GM10248 (cell line): ENCODE measurements at regions of chr10 and their contacts with region 1.

Region 1: DNA sequence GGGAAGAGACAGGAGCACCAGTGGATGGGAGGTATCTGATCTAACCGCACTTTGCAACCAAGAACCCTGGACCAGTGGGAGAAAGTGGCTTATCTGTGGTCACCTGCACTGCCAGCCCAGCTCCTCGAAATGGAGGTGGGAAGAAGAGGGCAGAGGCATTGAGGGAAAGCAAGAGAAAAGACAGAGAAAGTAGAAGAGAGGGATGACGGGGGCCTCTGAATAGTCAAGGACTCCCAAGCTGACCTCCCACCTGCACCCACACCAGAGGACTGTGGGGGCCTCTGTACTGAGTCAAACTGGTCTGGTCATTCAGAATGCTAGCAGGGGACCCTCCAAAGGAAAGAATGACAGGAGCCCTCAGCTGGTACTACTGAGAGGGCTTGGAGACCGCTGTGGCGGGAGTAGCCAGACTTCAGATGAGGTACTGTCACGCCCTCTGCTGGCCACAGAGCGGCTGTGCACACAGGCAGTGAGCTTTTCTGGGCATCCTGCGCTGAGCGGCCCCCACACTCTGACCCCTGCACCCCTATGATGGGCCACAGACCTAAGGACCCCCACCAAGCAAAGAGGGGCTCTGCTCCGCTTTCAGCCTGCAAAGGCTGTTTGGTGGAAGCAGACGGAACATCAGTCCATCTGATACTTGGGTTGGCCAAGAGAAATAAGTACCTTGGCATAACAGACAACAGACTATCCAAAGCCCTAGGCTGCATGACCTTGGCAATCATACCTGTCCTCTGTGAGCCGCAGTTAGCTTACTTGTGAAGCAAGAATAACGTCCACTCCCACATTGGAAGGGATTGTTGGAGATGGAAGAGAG is 112.9 kb downstream of the COL13A1 start:
- DNase-seq: peak; percentile 79
- CTCF ChIP-seq: peak; percentile 94

Region 2: GRCh38 chr10:69403519-69403918 is 511.1 kb before region 1 on chr10:
- CTCF ChIA-PET with region 1: no interaction called
- POLR2A ChIA-PET with region 1: no interaction called
- DNase-seq: no peak
- CTCF ChIP-seq: no peak

Region 3: GRCh38 chr10:69644658-69645295 is 269.8 kb before region 1 on chr10:
- CTCF ChIA-PET with region 1: interaction called, 21 read pairs
- POLR2A ChIA-PET with region 1: no interaction called
- DNase-seq: peak; percentile 78
- CTCF ChIP-seq: peak; percentile 64

Region 4: DNA sequence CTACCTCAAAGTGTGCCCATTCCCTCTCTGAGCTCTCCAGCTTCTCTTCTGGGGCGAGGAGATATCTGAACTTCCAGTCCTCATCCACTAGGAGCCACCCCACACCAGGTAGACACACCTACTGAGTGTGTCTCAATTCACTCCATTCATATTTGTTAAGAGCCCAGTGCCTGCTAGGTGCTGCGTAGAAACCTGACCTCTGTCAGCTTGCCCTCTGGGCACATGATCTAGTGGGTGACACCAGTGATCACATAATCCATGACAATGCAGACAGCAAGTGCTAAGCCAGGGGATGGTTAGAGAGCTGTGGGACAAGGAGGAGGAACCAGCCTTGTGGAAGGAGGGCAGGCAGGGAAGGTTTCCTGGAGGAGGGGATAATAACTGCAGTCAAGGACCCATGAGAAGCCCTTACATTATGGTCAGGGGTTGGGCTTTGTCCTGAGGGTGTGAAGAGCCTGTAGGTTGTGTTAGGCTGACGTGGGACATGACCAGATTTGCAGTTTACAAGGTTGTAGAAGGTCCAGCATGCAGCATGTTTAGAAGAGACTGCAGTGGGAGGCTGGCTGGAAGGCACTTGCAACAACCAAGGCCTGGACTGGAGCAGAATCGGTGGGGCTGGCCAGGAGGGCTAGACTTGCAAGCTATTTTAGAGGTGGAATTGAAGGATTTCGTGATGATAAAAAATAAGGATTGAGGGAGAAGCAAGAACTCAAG is 31.1 kb before region 1 on chr10:
- CTCF ChIA-PET with region 1: interaction called, 16 read pairs
- POLR2A ChIA-PET with region 1: no interaction called
- DNase-seq: no peak
- CTCF ChIP-seq: no peak

Region 5: DNA sequence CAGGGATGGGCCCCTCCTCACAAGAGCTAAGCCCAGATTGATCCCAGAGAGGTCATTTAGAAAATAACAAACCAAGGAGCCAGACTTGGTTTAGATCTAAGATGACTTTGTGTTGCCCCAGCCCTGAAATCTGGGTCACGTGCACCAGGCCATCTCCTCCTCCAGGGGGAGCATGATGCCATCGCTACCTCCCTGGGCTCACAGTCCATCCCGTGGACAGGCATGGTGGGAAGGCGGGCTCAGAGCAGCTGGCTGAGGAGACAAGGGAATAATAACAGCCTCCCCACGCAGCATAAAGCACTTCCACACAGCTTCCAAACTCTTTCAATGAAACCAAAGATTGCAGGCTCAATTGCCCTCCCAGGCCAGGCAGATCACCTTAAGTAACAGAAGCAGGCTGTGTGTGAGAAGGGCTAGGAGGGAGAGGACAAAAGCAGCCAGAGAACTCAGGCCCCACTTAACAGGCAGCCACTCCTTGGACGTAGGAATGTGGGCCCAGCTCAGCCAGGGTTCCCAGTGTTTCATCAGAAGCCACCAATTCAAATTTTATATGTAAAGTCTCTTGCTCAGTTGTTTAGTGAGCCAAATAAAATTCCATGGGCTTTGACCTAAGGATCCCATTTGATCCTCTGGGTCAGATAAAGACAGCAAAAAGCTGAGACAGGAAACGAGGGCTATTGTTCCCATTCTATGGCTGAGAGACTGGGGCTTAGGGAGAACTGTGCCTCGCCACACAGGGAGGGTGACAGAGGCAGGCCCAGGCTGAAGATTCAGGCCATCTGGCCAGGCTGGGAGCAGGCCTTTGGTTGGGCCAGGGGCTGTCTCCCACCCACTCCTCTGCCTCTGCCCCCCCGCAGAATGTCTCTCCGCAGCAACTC is 12.7 kb before region 1 on chr10:
- CTCF ChIA-PET with region 1: interaction called, 24 read pairs
- POLR2A ChIA-PET with region 1: no interaction called
- DNase-seq: no peak
- CTCF ChIP-seq: peak; percentile 26

Region 6: GRCh38 chr10:69936091-69936490 is 21.5 kb after region 1 on chr10:
- CTCF ChIA-PET with region 1: interaction called, 13 read pairs
- POLR2A ChIA-PET with region 1: no interaction called
- DNase-seq: peak; percentile 51
- CTCF ChIP-seq: peak; percentile 41